H1 (cell line): ENCODE measurements at regions of chr5 and their contacts with region 1.

Region 1: DNA sequence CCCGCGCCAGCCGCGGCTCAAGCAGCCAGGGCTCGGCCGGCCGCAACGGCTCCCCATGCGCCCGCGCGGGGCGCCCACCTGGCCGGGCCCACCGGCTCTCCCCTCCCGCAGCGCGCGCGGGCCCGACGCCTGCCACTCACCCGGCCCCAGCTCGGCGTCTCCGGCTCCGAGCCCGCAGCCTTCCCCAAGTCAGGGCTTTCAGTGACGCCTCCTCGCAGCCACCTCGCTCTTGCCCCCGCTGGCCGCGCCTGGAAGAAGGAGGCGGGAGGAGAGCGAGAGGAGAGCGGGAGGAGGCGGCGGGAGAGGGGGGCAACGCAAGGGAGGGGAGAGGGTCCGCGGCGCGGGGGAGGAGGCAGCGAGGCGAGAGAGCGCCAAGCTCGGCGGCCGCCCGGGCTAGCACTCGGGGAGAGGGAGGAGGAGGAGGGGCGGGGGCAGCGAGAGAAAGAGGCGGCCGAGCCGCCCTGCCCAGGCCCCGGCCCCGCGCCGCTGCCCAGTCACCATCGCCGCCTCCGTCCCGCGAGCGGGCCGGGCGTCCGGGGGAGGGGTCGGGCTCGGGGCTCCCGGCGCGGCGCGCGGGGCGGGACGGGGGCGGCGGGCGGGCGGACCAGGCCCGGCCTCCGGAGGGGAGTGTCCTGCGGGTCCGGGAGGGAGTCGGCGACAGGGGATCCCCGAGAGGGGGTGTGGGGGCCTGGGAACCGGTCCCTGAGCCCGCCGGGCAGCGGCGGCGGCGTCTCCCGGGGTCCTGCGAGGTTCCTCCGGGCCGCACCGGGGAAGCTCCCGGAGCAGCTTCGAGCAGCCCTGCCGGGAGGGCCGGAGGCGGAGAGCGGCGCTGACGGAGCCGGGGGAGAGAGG is at the start of gene LHFPL2:
- DNase-seq: peak in 1 of 2 experiments; percentile 84
- H3K4me3 ChIP-seq: peak within 1 kb of the TSS; percentile 61 to 93 (median 86)
- H3K27ac ChIP-seq: peak within 1 kb of the TSS; percentile 74; the same call in 1 of the 2 replicates
- H3K4me1 ChIP-seq: peaks cover 0 to 15% (median under 1%) of the 10 kb centered on the region in 4 experiments; a peak in 3 of 7 replicates
- H3K27me3 ChIP-seq: no peaks in the 10 kb centered on the region
- CTCF ChIP-seq: no peak
- EP300 ChIP-seq: no peak
- POLR2A ChIP-seq: no peak; a peak in 2 of 3 replicates
- RAD21 ChIP-seq: no peak
- total RNA-seq, gene LHFPL2: 38.0 and 43.0 TPM in 2 replicates

Region 2: GRCh38 chr5:78638423-78638822 is 10.2 kb before region 1 on chr5:
- CTCF ChIA-PET with region 1: interaction called, 12 read pairs
- POLR2A ChIA-PET with region 1: interaction called, 40 read pairs
- DNase-seq: no peak
- H3K4me3 ChIP-seq: no peak overlapping the region
- H3K27ac ChIP-seq: no peak overlapping the region
- H3K4me1 ChIP-seq: peaks cover 2 to 20% (median 12%) of the 10 kb centered on the region in 4 experiments
- H3K27me3 ChIP-seq: peaks cover 0 to 1% (median 0%) of the 10 kb centered on the region in 4 experiments; a peak in 1 of 7 replicates
- CTCF ChIP-seq: no peak
- EP300 ChIP-seq: no peak
- POLR2A ChIP-seq: no peak
- RAD21 ChIP-seq: no peak

Region 3: GRCh38 chr5:78666041-78666444 is 17.5 kb after region 1 on chr5:
- CTCF ChIA-PET with region 1: no interaction called
- POLR2A ChIA-PET with region 1: interaction called, 11 read pairs
- DNase-seq: no peak
- H3K4me3 ChIP-seq: no peak overlapping the region
- H3K27ac ChIP-seq: no peak overlapping the region
- H3K4me1 ChIP-seq: peaks cover 0 to 2% (median 0%) of the 10 kb centered on the region in 4 experiments; a peak in 1 of 7 replicates
- H3K27me3 ChIP-seq: no peaks in the 10 kb centered on the region
- CTCF ChIP-seq: no peak
- EP300 ChIP-seq: no peak
- POLR2A ChIP-seq: no peak
- RAD21 ChIP-seq: no peak

Region 4: DNA sequence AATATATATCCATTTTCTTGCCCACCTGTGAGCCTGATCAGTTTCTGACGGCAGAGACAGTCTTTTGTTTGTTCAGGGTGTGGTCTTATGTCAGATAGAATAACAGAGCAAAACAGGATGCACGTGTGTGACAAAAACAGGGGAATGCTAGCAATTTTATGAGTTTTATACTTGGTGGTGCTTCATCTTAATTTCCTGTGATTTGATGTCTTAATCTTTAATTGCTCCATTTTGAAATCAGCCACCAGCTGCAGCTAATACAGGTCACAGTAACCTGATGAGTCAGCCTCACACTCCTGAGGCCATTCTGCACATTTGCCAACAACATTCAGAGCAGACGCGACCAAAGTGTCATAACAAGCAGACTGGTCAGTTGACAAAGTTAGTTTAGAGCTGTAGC is 545.1 kb after region 1 on chr5:
- CTCF ChIA-PET with region 1: no interaction called
- POLR2A ChIA-PET with region 1: no interaction called
- DNase-seq: no peak
- H3K4me3 ChIP-seq: no peak overlapping the region
- H3K27ac ChIP-seq: no peak overlapping the region
- H3K4me1 ChIP-seq: no peaks in the 10 kb centered on the region
- H3K27me3 ChIP-seq: no peaks in the 10 kb centered on the region
- CTCF ChIP-seq: no peak
- EP300 ChIP-seq: no peak
- POLR2A ChIP-seq: no peak
- RAD21 ChIP-seq: no peak